Tibial artery (tissue), 4 donors: ENCODE measurements at regions of chr20 and their contacts with region 1.

Region 1: DNA sequence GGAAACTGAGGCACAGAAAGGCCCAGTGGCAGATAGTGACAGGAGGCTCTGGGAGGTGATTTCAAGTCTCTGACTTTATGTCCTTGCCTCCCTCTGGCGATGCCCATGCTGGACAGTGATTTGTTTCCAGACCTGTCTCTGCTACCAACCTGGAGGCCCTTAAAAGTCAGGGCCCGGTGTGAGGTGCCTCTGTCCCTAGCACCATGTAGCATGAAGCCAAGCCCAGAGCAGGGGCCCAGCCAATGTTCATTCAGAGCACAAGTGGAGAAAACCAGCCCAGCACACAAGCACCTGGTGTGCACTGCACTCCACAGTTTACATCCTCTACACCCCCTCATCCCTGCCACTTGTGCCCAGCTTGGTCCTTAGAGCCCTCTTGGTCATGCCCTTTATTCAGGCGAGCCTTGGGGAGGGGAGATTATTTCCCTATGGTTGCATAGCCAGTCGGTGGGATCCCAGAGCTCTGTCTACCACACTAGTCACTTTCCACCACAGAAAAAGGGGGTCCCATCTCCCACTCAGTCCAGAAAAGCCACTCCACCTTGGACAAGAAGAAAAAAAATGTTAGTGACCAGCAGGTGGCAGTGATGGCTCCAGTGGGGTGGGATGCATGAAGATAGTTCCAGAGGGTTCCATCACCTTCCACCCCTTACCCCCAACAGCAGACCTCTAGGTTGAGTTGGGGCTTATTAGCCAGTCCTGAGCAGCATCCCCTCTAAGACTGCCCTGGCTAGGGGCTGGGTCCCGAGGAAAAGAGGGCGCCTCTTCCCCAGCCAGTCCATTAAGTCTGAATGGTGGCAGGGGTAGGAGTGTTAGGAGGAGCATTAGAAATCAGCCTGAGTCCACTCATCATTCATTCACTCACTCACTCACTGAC is 30.9 kb downstream of the KIAA1755 start:
- DNase-seq: no peak
- H3K4me3 ChIP-seq: no peak overlapping the region
- H3K27ac ChIP-seq: no peak overlapping the region
- H3K4me1 ChIP-seq: no peaks in the 10 kb centered on the region
- H3K27me3 ChIP-seq: no peaks in the 10 kb centered on the region
- CTCF ChIP-seq: peak; percentile 47 to 69

Region 2: DNA sequence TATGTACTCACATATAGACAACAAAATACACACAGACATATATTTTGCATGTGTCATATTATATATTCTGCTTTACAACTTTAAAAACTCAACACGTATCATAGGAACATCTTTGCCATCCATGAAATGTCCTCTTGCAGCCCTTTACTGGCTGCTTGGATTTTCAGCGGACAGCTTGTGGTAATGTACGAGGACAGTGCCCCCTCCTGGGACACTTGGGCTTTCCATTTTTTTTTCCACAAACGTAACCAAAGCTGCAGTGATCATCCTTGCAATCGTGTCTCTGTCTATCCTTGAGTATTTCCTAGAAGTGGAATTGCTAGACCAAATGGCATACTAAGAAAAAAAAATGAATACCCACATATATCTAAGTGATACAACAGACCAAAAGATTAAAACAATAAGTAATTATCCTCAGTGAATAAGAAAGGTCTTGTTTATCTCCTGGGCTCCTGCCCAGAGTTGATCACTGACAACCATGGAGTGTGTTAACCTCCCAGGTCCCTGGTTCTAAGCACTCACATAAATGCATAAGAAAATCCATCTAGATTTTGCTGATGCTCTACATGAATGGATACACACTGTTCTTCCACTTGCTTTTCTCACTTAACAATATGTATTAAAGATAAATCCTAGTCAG is 92.5 kb after region 1 on chr20:
- intact Hi-C with region 1: loop called (anchors 5 kb)
- DNase-seq: peak in 1 of 2 donors; percentile 46
- H3K4me3 ChIP-seq: no peak overlapping the region
- H3K27ac ChIP-seq: no peak overlapping the region
- H3K4me1 ChIP-seq: no peaks in the 10 kb centered on the region
- H3K27me3 ChIP-seq: peaks cover 0 to 2% of the 10 kb centered on the region in 2 donors
- CTCF ChIP-seq: peak; percentile 70 to 76

Region 3: GRCh38 chr20:38406476-38406875 is 176.9 kb after region 1 on chr20:
- intact Hi-C with region 1: loop called (anchors 10 kb)
- DNase-seq: no peak
- H3K4me3 ChIP-seq: no peak overlapping the region
- H3K27ac ChIP-seq: no peak overlapping the region
- H3K4me1 ChIP-seq: no peaks in the 10 kb centered on the region
- H3K27me3 ChIP-seq: no peaks in the 10 kb centered on the region
- CTCF ChIP-seq: no peak